AG04449 (cell line): ENCODE measurements at regions of chr1 and their contacts with region 1.

Region 1: GRCh38 chr1:24688621-24689195 is 45.6 kb downstream of the SRRM1 start:
- DNase-seq: no peak
- H3K4me3 ChIP-seq: no peak overlapping the region
- CTCF ChIP-seq: peak; percentile 89

Region 2: DNA sequence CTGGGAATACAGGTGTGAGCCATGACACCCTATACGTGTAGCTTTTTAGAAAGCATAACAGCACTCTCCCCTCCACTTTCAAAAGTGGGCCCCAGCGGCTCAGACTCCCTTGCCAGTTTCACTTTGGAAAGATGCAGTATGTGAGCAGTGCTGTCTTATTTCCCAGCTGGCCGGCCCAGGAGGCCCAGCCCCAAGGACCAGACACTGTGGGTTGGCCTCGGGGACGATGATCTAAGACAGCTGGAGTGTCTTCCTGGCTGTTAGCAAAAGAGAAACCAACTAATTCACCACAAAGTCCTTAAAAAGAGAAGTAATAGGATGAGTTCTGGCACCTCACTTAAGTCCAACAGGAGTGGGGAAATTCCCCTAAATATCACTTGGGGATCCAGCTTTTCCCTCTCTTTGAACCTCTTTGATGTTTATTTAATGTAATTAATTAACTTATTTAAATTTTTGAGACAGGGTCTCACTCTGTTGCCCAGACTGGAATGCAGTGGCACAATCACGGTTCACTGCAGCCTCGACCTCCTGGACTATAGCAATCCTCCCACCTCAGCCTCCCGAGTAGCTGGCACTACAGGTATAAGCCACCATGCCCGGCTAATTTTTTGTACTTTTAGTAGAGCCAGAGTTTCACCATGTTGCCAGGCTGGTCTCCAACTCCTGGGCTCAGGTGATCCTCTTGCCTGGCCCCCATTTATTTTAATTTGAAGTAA is 39.0 kb after region 1 on chr1:
- CTCF ChIA-PET with region 1: interaction called, 25 read pairs
- POLR2A ChIA-PET with region 1: no interaction called
- DNase-seq: no peak
- H3K4me3 ChIP-seq: peak overlapping the region; percentile 27
- CTCF ChIP-seq: no peak

Region 3: DNA sequence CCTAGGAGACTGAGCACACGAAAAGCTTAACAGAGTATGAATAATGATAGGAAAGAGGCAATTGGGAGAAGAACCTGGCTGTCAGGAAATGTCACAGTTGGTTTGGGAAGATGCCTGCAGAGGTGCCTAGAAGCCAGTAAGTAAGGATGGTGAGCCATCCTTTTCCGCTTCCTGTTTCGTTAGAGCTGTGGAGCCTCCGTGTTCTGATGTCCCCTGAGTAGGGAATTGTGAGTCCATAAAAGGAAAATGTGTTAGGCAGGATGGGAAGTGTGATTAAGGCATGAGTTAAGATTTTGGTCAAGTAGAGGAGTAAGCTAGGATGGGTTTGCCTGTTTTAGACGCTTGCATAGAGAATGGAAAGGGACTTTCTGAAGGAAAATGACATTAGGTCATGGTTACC is 65.5 kb after region 1 on chr1:
- CTCF ChIA-PET with region 1: interaction called, 22 read pairs
- POLR2A ChIA-PET with region 1: interaction called, 4 read pairs
- DNase-seq: no peak
- H3K4me3 ChIP-seq: no peak overlapping the region
- CTCF ChIP-seq: no peak

Region 4: GRCh38 chr1:24793447-24794131 is 104.9 kb after region 1 on chr1:
- CTCF ChIA-PET with region 1: interaction called, 13 read pairs
- POLR2A ChIA-PET with region 1: no interaction called
- DNase-seq: peak; percentile 62
- H3K4me3 ChIP-seq: no peak overlapping the region
- CTCF ChIP-seq: no peak

Region 5: GRCh38 chr1:24841593-24841992 is 152.9 kb after region 1 on chr1:
- CTCF ChIA-PET with region 1: interaction called, 101 read pairs
- POLR2A ChIA-PET with region 1: no interaction called
- DNase-seq: no peak
- H3K4me3 ChIP-seq: no peak overlapping the region
- CTCF ChIP-seq: no peak

Region 6: GRCh38 chr1:24897767-24898483 is 209.2 kb after region 1 on chr1:
- CTCF ChIA-PET with region 1: interaction called, 14 read pairs
- POLR2A ChIA-PET with region 1: no interaction called
- DNase-seq: no peak
- H3K4me3 ChIP-seq: no peak overlapping the region
- CTCF ChIP-seq: peak; percentile 95